IMR-90 (cell line): ENCODE measurements at regions of chr13 and their contacts with region 1.

Region 1: GRCh38 chr13:29508130-29508875 is 87.2 kb downstream of the SLC7A1 start:
- DNase-seq: peak; percentile 79
- ATAC-seq: peak; percentile 87
- H3K4me3 ChIP-seq: no peak overlapping the region
- H3K27ac ChIP-seq: no peak overlapping the region
- H3K4me1 ChIP-seq: peaks cover 2% of the 10 kb centered on the region
- H3K27me3 ChIP-seq: no peaks in the 10 kb centered on the region
- CTCF ChIP-seq: peak; percentile 94
- POLR2A ChIP-seq: no peak
- RAD21 ChIP-seq: peak; percentile 93

Region 2: DNA sequence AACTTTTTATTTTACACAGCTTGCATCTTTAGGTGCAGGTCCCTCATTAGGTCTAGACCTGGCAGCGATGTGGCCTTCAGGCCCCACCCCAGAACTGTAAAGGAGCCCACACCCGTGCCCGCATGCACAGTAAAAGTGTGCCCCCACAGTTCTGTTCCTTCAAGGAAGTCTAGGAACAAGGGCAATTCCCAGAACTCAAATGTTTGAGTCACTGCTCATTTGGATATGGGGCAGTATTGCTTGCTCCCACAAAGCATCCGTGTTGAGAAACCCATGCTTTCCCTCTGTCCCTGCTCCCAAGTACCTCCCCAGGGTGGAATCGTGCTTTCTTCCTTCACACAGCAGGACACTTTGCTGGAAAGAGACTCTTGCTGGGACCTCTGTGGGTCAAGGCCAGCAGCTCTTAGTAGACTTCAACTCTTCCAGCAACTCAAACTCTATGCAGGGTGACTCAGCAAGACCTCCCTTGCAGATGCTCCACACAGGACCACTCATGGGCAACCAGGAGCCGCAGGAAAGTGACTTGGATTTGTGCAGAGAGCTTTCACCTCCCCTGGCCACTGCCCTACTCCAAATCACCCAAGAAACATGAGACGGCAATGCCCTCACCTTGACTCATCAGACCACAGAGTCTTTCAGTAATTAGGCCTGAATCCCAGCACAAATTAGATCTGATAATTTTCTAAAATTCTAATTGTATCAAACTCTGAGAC is 74.9 kb after region 1 on chr13:
- CTCF ChIA-PET with region 1: no interaction called
- POLR2A ChIA-PET with region 1: no interaction called
- dilution Hi-C with region 1: no loop called
- in situ Hi-C with region 1: no loop called
- intact Hi-C with region 1: no loop called
- DNase-seq: peak; percentile 76
- ATAC-seq: peak; percentile 77
- H3K4me3 ChIP-seq: no peak overlapping the region
- H3K27ac ChIP-seq: no peak overlapping the region
- H3K4me1 ChIP-seq: peaks cover 14% of the 10 kb centered on the region
- H3K27me3 ChIP-seq: no peaks in the 10 kb centered on the region
- CTCF ChIP-seq: no peak
- POLR2A ChIP-seq: no peak
- RAD21 ChIP-seq: 0 out of 2 replicates have a peak, but pooled peaks have one; percentile 3

Region 3: GRCh38 chr13:29702912-29703351 is 194.6 kb after region 1 on chr13:
- CTCF ChIA-PET with region 1: interaction called, 11 read pairs
- POLR2A ChIA-PET with region 1: no interaction called
- dilution Hi-C with region 1: no loop called
- in situ Hi-C with region 1: no loop called
- intact Hi-C with region 1: loop called (anchors 1 kb)
- DNase-seq: peak; percentile 69
- ATAC-seq: peak; percentile 59
- H3K4me3 ChIP-seq: no peak overlapping the region
- H3K27ac ChIP-seq: no peak overlapping the region
- H3K4me1 ChIP-seq: no peaks in the 10 kb centered on the region
- H3K27me3 ChIP-seq: peaks cover 7% of the 10 kb centered on the region
- CTCF ChIP-seq: no peak
- POLR2A ChIP-seq: no peak
- RAD21 ChIP-seq: no peak

Region 4: DNA sequence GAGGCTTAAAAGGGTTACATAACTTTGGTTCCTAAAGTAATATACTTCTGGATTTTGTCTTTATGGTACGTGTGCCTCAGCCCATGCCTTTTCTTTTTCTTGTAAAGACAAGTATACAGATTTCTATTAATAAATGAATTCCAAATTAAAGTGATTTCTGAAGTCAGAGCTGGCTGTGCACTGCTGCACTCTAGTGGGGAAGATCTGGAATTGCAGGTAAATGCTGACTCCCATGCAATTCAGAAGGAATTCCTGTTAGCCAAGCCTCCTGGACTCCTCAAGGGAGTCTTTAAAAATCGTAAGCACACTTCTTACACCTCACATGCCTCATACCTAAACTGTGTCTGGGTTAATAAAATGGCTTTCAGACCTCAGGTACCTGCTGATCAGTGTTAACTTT is 205.5 kb after region 1 on chr13:
- CTCF ChIA-PET with region 1: interaction called, 3 read pairs
- POLR2A ChIA-PET with region 1: no interaction called
- dilution Hi-C with region 1: no loop called
- in situ Hi-C with region 1: loop called (anchors 5 kb)
- intact Hi-C with region 1: no loop called
- DNase-seq: peak; percentile 21
- ATAC-seq: peak; percentile 57; the same call in 1 of the 2 replicates
- H3K4me3 ChIP-seq: no peak overlapping the region
- H3K27ac ChIP-seq: no peak overlapping the region
- H3K4me1 ChIP-seq: no peaks in the 10 kb centered on the region
- H3K27me3 ChIP-seq: peaks cover 64% of the 10 kb centered on the region
- CTCF ChIP-seq: peak; percentile 65
- POLR2A ChIP-seq: no peak
- RAD21 ChIP-seq: peak; percentile 73

Region 5: GRCh38 chr13:29850224-29850898 is 342.1 kb after region 1 on chr13 and contains the start of gene UBL3:
- CTCF ChIA-PET with region 1: no interaction called
- POLR2A ChIA-PET with region 1: no interaction called
- dilution Hi-C with region 1: no loop called
- in situ Hi-C with region 1: no loop called
- intact Hi-C with region 1: loop called (anchors 2 kb)
- DNase-seq: peak; percentile 95
- ATAC-seq: peak; percentile 91
- H3K4me3 ChIP-seq: peak within 1 kb of the TSS; percentile 81
- H3K27ac ChIP-seq: peak within 1 kb of the TSS; percentile 98
- H3K4me1 ChIP-seq: peaks cover 4% of the 10 kb centered on the region; the same call in 1 of the 2 replicates
- H3K27me3 ChIP-seq: no peaks in the 10 kb centered on the region
- CTCF ChIP-seq: no peak
- POLR2A ChIP-seq: peak; percentile 86
- RAD21 ChIP-seq: no peak
- total RNA-seq, gene UBL3: 19.9 and 30.3 TPM in 2 replicates

Region 6: GRCh38 chr13:30114571-30115256 is 606.4 kb after region 1 on chr13:
- CTCF ChIA-PET with region 1: interaction called, 3 read pairs
- POLR2A ChIA-PET with region 1: no interaction called
- dilution Hi-C with region 1: no loop called
- in situ Hi-C with region 1: loop called (anchors 5 kb)
- intact Hi-C with region 1: loop called (anchors 1 kb)
- DNase-seq: peak; percentile 82
- ATAC-seq: peak; percentile 79
- H3K4me3 ChIP-seq: peak overlapping the region; percentile 61
- H3K27ac ChIP-seq: no peak overlapping the region
- H3K4me1 ChIP-seq: peaks cover 3% of the 10 kb centered on the region; the same call in 1 of the 2 replicates
- H3K27me3 ChIP-seq: no peaks in the 10 kb centered on the region; the same call in 1 of the 2 replicates
- CTCF ChIP-seq: peak; percentile 88
- POLR2A ChIP-seq: no peak
- RAD21 ChIP-seq: peak; percentile 89